Right ventricle myocardium superior (tissue), 1 donor: ENCODE measurements at regions of chr15 and their contacts with region 1.

Region 1: GRCh38 chr15:40754883-40755811 is at the start of gene RMDN3:
- DNase-seq: peak; percentile 96
- ATAC-seq: peak; percentile 100
- total RNA-seq, gene RMDN3: 17.3 TPM

Region 2: GRCh38 chr15:40694688-40695468 is 60.3 kb before region 1 on chr15 and contains the start of gene RAD51:
- intact Hi-C with region 1: loop called (anchors 10 kb)
- DNase-seq: peak; percentile 96
- ATAC-seq: peak; percentile 99
- total RNA-seq, gene RAD51: 0.43 TPM